Activated CD4-positive, alpha-beta T cell treated with anti-CD3 and anti-CD28 coated beads for 36 hours (primary cell): ENCODE measurements at regions of chr2 and their contacts with region 1.

Region 1: GRCh38 chr2:234705108-234705507 is 208.2 kb upstream of the ARL4C start:
- DNase-seq: peak; percentile 20
- ATAC-seq: peak; percentile 78
- H3K4me3 Mint-ChIP-seq: no peak overlapping the region
- H3K27ac Mint-ChIP-seq: no peak overlapping the region
- H3K4me1 Mint-ChIP-seq: peaks cover 7% of the 10 kb centered on the region
- H3K27me3 Mint-ChIP-seq: peaks cover 20% of the 10 kb centered on the region

Region 2: GRCh38 chr2:234985608-234986245 is 280.6 kb after region 1 on chr2:
- CTCF ChIA-PET with region 1: no interaction called
- POLR2A ChIA-PET with region 1: interaction called, 11 read pairs
- intact Hi-C with region 1: no loop called
- DNase-seq: no peak
- ATAC-seq: no peak
- H3K4me3 Mint-ChIP-seq: no peak overlapping the region
- H3K27ac Mint-ChIP-seq: no peak overlapping the region
- H3K4me1 Mint-ChIP-seq: no peaks in the 10 kb centered on the region
- H3K27me3 Mint-ChIP-seq: peaks cover 2% of the 10 kb centered on the region